Activated B cell treated with CpG ODN at 0.5 μM for 24 hours (primary cell): ENCODE measurements at regions of chr4 and their contacts with region 1.

Region 1: DNA sequence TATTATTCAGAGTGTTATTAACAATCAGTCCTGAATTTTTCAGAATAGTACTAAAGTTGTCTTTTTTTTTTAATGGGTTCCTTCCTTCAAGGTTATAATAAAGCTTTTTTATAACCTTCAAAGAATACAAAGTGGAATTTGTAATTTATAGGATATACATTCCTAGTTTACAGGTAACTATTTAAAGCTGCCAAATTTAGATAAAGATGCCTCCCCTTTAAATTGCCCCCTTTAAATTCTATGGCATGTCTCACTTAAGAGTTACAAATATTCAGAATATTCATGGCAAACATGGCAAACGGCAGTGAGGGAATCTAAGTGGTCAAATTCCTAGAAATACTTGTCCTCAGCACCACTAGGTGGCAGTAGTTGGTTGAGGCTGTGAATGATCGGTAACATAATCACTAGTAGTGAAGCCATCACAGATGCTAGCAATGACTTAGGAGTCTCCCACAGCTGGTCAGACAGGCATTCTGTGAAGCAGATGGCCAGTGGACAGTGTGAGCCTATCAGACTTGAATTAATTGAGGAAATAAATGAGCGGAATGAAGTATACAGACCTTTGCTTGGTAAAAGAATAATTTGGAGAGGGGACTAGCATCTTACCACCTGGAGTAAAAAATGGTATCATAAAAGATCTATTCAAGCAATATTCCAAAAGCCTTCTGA is 86.4 kb downstream of the CBR4 start:
- DNase-seq: no peak
- ATAC-seq: peak; percentile 54
- H3K4me3 Mint-ChIP-seq: no peak overlapping the region
- H3K27ac Mint-ChIP-seq: no peak overlapping the region
- H3K4me1 Mint-ChIP-seq: no peaks in the 10 kb centered on the region
- H3K27me3 Mint-ChIP-seq: no peaks in the 10 kb centered on the region
- CTCF ChIP-seq: peak; percentile 61

Region 2: GRCh38 chr4:168514249-168514852 is 409.3 kb before region 1 on chr4:
- CTCF ChIA-PET with region 1: interaction called, 13 read pairs
- POLR2A ChIA-PET with region 1: no interaction called
- intact Hi-C with region 1: no loop called
- DNase-seq: no peak
- ATAC-seq: no peak
- H3K4me3 Mint-ChIP-seq: no peak overlapping the region
- H3K27ac Mint-ChIP-seq: no peak overlapping the region
- H3K4me1 Mint-ChIP-seq: no peaks in the 10 kb centered on the region
- H3K27me3 Mint-ChIP-seq: peaks cover 2% of the 10 kb centered on the region
- CTCF ChIP-seq: no peak

Region 3: DNA sequence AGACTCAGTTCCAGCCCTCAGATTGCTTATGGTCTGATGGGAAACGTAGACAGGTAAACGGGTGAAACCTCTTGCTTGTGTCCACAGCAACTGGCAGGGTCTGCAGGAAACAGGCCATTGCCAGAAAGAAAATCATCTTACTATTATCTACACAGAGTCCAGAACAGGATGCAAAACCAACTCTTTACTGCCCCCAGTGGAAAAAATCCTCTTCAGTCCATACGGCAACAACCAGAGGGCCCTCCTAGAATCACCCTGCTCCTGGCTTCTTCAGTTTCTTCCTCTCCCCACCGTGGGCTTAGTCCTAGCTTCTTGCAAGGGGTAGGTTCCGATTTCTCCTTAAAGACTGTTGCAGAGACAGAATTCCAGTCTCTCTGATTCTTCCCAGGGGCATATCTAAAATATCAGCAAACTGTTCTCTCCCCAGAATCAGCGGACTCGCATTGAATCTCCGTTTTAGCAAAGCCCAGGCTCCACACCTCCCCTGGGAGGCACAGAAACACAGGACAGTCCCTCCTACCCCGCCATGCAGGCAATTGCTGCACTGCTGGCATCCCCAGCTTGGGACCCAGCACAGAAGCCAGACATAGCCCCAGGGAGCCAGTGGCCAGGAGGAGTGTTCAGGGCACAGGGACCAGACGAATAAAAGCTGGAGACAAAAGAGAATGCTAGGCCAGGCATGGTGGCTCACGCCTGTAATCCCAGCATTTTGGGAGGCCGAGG is 388.1 kb after region 1 on chr4:
- CTCF ChIA-PET with region 1: interaction called, 5 read pairs
- POLR2A ChIA-PET with region 1: no interaction called
- intact Hi-C with region 1: loop called (anchors 1 kb)
- DNase-seq: no peak
- ATAC-seq: peak; percentile 74
- H3K4me3 Mint-ChIP-seq: no peak overlapping the region
- H3K27ac Mint-ChIP-seq: no peak overlapping the region
- H3K4me1 Mint-ChIP-seq: no peaks in the 10 kb centered on the region
- H3K27me3 Mint-ChIP-seq: peaks cover 3% of the 10 kb centered on the region
- CTCF ChIP-seq: no peak

Region 4: GRCh38 chr4:169492438-169493163 is 568.9 kb after region 1 on chr4:
- CTCF ChIA-PET with region 1: interaction called, 37 read pairs
- POLR2A ChIA-PET with region 1: no interaction called
- intact Hi-C with region 1: no loop called
- DNase-seq: no peak
- ATAC-seq: peak; percentile 34
- H3K4me3 Mint-ChIP-seq: no peak overlapping the region
- H3K27ac Mint-ChIP-seq: no peak overlapping the region
- H3K4me1 Mint-ChIP-seq: no peaks in the 10 kb centered on the region
- H3K27me3 Mint-ChIP-seq: no peaks in the 10 kb centered on the region
- CTCF ChIP-seq: no peak

Region 5: GRCh38 chr4:170047771-170048354 is 1124.2 kb after region 1 on chr4:
- CTCF ChIA-PET with region 1: interaction called, 7 read pairs
- POLR2A ChIA-PET with region 1: no interaction called
- intact Hi-C with region 1: loop called (anchors 2 kb)
- DNase-seq: no peak
- ATAC-seq: no peak
- H3K4me3 Mint-ChIP-seq: no peak overlapping the region
- H3K27ac Mint-ChIP-seq: no peak overlapping the region
- H3K4me1 Mint-ChIP-seq: no peaks in the 10 kb centered on the region
- H3K27me3 Mint-ChIP-seq: peaks cover 3% of the 10 kb centered on the region
- CTCF ChIP-seq: peak; percentile 51